ENCODE measurements at regions of chr17 and their contacts with region 1.

Region 1: GRCh38 chr17:2511462-2512369 is at the start of gene METTL16:
- DNase-seq: peak; percentile 100
- ATAC-seq: peak; percentile 99
- H3K4me3 Mint-ChIP-seq: no peak within 1 kb of the TSS
- H3K27ac Mint-ChIP-seq: no peak within 1 kb of the TSS
- H3K4me1 Mint-ChIP-seq: peaks cover 17% of the 10 kb centered on the region
- H3K27me3 Mint-ChIP-seq: no peaks in the 10 kb centered on the region
- total RNA-seq, gene METTL16: 50.1 to 61.6 TPM

Region 2: GRCh38 chr17:2369551-2370210 is 142.0 kb before region 1 on chr17:
- CTCF ChIA-PET with region 1: no interaction called
- POLR2A ChIA-PET with region 1: no interaction called
- intact Hi-C with region 1: no loop called
- DNase-seq: no peak
- ATAC-seq: no peak
- H3K4me3 Mint-ChIP-seq: no peak overlapping the region
- H3K27ac Mint-ChIP-seq: no peak overlapping the region
- H3K4me1 Mint-ChIP-seq: no peaks in the 10 kb centered on the region
- H3K27me3 Mint-ChIP-seq: no peaks in the 10 kb centered on the region

Region 3: GRCh38 chr17:2500446-2500845 is 11.3 kb before region 1 on chr17:
- CTCF ChIA-PET with region 1: no interaction called
- POLR2A ChIA-PET with region 1: no interaction called
- intact Hi-C with region 1: no loop called
- DNase-seq: no peak
- ATAC-seq: no peak
- H3K4me3 Mint-ChIP-seq: no peak overlapping the region
- H3K27ac Mint-ChIP-seq: no peak overlapping the region
- H3K4me1 Mint-ChIP-seq: peaks cover 6% of the 10 kb centered on the region
- H3K27me3 Mint-ChIP-seq: no peaks in the 10 kb centered on the region

Region 4: GRCh38 chr17:2592971-2593820 is 81.5 kb after region 1 on chr17 and contains the start of gene PAFAH1B1:
- CTCF ChIA-PET with region 1: no interaction called
- POLR2A ChIA-PET with region 1: interaction called, 4 read pairs
- intact Hi-C with region 1: loop called (anchors 1 kb)
- DNase-seq: peak; percentile 98
- ATAC-seq: peak; percentile 84
- H3K4me3 Mint-ChIP-seq: peak within 1 kb of the TSS; percentile 79
- H3K27ac Mint-ChIP-seq: peak within 1 kb of the TSS; percentile 88
- H3K4me1 Mint-ChIP-seq: peaks cover 25% of the 10 kb centered on the region
- H3K27me3 Mint-ChIP-seq: no peaks in the 10 kb centered on the region
- total RNA-seq, gene PAFAH1B1: 163 to 167 TPM